ENCODE measurements at regions of chr1 and their contacts with region 1.

Region 1: GRCh38 chr1:29711582-29712283 is 475.4 kb downstream of the PTPRU start:
- DNase-seq: no peak
- H3K4me3 ChIP-seq: no peak overlapping the region
- H3K27ac ChIP-seq: no peak overlapping the region
- H3K4me1 ChIP-seq: peaks cover 23% of the 10 kb centered on the region
- H3K27me3 ChIP-seq: no peaks in the 10 kb centered on the region
- CTCF ChIP-seq: no peak
- POLR2A ChIP-seq: no peak

Region 2: DNA sequence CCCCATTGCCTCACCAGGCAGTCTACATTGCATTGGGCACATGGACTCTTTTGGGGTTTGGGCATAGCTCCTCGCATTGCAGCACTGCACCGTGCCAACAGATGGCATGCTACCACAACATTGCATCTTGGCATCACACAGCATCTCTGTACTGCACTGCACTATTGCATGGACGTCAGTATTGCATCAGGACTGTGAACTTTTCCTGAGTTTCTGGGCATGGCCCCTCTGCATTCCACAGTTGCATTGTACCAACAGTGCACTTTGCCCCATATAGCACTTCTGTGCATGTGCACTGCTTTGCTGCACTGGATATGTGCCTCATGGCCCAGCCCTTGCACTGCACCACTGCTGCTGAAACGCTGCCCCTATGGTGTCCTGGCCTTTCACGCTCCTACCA is 465.9 kb before region 1 on chr1:
- intact Hi-C with region 1: loop called (anchors 5 kb)
- DNase-seq: no peak
- H3K4me3 ChIP-seq: no peak overlapping the region
- H3K27ac ChIP-seq: no peak overlapping the region
- H3K4me1 ChIP-seq: peaks cover 11% of the 10 kb centered on the region
- H3K27me3 ChIP-seq: no peaks in the 10 kb centered on the region
- CTCF ChIP-seq: no peak
- POLR2A ChIP-seq: no peak